ENCODE measurements at regions of chr15 and their contacts with region 1.

Region 1: DNA sequence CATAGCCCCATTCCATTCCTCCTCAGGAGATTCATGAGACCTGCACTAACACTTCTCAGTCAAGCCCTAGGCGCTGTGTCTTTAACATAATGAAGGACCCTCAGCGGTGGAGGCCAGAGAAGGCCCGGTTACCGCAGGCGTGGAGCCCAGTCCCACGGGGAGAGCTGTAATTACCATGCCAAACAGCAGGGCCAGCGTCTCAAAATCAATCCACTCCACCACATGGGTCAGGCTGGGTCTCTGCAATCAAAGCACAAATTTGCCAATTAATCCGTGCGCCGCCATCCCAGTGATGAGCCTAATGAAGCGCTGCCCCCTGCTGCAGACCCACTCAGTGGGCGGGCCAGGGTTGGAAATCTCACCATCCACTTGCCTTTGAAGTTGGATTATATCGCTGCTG is 109.7 kb downstream of the OCA2 start:
- DNase-seq: no peak
- H3K4me3 ChIP-seq: no peak overlapping the region
- H3K27ac ChIP-seq: no peak overlapping the region
- H3K4me1 ChIP-seq: no peaks in the 10 kb centered on the region
- H3K27me3 ChIP-seq: no peaks in the 10 kb centered on the region
- CTCF ChIP-seq: no peak
- POLR2A ChIP-seq: no peak

Region 2: DNA sequence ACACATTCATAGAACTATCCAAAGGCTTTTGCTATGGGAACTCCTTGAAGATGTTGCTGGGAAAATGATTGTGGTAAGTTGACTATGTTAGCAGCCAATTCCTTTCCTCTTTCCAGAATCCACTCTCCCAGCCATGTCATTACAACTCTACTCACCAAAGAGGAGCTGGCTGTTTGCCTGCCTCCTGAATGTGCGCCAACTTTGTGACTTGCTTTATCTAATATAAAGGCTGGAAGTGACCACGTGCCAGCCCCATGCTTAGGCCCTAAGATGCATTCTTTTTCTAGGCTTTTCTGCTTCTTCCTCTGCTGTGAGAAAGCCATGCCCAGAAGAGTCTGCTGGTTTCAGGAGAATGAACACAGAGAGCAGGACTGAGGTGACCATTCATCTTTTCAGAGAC is 1398.8 kb before region 1 on chr15:
- intact Hi-C with region 1: loop called (anchors 5 kb)
- DNase-seq: no peak
- H3K4me3 ChIP-seq: no peak overlapping the region
- H3K27ac ChIP-seq: no peak overlapping the region
- H3K4me1 ChIP-seq: no peaks in the 10 kb centered on the region
- H3K27me3 ChIP-seq: no peaks in the 10 kb centered on the region
- CTCF ChIP-seq: no peak
- POLR2A ChIP-seq: no peak

Region 3: DNA sequence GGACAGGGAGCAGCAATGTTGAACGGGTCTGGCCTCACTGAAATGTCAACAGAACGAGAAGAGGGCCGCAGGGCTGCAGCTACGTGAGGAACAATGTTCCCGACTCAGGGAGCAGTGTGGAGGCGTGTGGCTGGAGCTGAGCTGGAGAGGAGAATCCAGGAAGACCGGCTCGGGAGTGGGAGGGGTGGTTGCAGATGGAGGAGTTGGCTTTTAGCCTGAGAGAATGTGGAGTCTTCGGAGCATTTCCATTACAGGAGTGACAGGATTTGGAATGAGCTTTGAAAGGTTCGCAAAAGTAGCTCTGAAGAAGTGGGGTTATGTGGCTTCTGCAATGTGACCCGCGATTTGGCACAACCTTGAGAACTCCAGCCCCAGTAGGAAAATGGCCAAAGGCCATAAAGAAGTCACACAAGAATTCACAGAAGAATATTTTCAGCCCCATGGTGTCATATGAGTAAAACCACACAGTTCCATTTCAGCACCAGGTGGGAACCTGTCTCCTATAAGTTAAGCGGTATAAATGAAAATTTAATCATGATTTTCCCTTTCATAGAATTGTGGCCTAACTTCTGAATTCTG is 1359.0 kb after region 1 on chr15:
- intact Hi-C with region 1: no loop called
- DNase-seq: peak in 1 of 2 donors; percentile 50
- H3K4me3 ChIP-seq: no peak overlapping the region
- H3K27ac ChIP-seq: no peak overlapping the region
- H3K4me1 ChIP-seq: no peaks in the 10 kb centered on the region
- H3K27me3 ChIP-seq: no peaks in the 10 kb centered on the region
- CTCF ChIP-seq: no peak
- POLR2A ChIP-seq: no peak